ENCODE measurements at regions of chr16 and their contacts with region 1.

Region 1: DNA sequence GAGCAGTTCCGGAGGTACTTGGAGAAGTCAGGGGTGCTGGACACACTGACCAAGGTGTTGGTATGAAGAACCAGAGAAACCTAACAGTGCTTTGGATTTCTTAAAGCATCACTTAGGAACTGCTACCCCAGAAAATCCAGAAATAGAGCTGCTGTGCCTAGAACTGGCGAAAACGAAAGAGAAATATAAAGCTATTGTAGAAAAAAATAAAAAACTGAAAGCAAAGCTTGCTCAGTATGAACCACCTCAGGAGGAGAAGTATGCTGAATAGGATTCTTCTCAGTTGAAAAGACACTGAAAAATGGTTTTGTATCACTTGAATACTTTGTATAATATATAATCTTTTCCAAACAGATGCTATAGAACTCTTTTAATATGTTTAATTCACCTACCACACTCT is 106.3 kb upstream of the PMFBP1 start:
- DNase-seq: no peak
- ATAC-seq: no peak
- H3K4me3 Mint-ChIP-seq: no peak overlapping the region
- H3K27ac Mint-ChIP-seq: no peak overlapping the region
- H3K4me1 Mint-ChIP-seq: no peaks in the 10 kb centered on the region
- H3K27me3 Mint-ChIP-seq: no peaks in the 10 kb centered on the region

Region 2: DNA sequence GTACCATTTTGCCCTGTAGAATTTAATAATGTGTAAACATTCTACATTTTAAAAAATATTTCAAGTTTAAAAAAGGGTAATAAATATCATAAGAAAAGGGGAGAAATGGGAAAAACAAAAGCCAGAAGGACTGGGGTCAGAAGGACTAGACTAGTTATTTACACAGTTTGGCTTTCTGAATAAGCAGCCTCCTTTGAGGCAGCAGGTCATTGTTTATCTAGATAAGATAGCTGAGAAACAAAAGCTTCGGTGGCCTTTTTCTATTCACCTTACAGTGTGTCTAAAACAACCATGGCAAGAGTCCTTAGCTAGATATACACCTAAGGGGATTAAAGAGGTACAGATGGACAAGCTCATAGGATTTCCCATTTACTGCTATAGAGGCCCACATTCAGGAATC is 290.2 kb after region 1 on chr16:
- CTCF ChIA-PET with region 1: no interaction called
- POLR2A ChIA-PET with region 1: interaction called, 12 read pairs
- intact Hi-C with region 1: no loop called
- DNase-seq: no peak
- ATAC-seq: no peak
- H3K4me3 Mint-ChIP-seq: no peak overlapping the region
- H3K27ac Mint-ChIP-seq: no peak overlapping the region
- H3K4me1 Mint-ChIP-seq: no peaks in the 10 kb centered on the region
- H3K27me3 Mint-ChIP-seq: no peaks in the 10 kb centered on the region

Measured in activated CD4-positive, alpha-beta T cell treated with anti-CD3 and anti-CD28 coated beads for 36 hours (primary cell).